ENCODE measurements at regions of chr1 and their contacts with region 1.

Region 1: DNA sequence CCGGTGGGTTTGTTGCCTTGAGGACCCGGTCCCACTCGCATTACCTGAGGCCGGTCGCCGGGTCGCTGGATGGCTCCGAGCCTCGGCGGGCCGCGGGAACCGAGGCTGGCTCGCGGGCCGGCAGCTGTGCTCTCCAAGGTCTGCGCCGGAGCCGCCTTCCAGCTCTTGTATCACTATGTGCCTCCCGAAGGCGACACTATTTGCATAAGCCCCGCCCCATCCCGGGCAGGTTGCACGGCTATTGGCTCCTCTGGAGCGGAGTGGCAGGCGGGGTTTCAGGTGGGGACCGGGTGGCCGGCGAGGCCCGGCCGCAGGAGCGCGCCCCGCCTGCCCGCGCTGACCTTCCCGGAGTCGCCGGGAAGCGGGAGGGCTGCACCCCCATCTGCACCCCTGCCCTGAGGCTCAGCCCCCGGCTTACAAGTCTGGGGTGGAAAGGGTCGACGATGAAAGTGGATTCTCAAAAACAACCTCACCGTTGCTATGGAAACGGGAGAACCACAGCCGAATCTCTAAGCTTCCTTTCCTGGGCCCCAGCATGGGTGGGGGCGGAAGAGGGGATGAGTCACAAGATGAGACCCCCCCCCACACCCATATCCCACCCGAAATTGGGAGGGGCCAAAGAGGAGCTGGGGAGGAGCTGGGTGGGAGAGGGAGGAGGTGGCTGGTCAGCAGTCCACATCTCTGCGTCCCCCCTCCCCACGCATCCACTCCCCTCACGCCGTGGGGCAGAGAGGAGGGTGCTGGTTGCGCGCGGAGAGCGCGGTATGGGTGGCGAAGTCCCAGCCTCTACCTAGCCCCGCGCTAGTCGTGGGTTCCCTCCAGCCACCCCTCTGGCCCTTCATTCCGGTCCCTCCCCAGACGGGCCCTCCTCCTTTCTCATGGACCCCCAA is at the start of gene HPCAL4:
- DNase-seq: peak; percentile 86 to 97
- H3K4me3 ChIP-seq: peak within 1 kb of the TSS; percentile 52
- H3K27ac ChIP-seq: no peak within 1 kb of the TSS
- H3K4me1 ChIP-seq: peaks cover 15% of the 10 kb centered on the region
- H3K27me3 ChIP-seq: peaks cover 7% of the 10 kb centered on the region; the same call in 1 of the 2 replicates
- CTCF ChIP-seq: no peak
- total RNA-seq, gene HPCAL4: 0.07 TPM in 1 of 2 replicates, not detected in the other

Region 2: GRCh38 chr1:39544327-39544726 is 147.2 kb before region 1 on chr1:
- CTCF ChIA-PET with region 1: interaction called, 24 read pairs
- POLR2A ChIA-PET with region 1: no interaction called
- intact Hi-C with region 1: no loop called
- DNase-seq: no peak
- H3K4me3 ChIP-seq: no peak overlapping the region
- H3K27ac ChIP-seq: no peak overlapping the region
- H3K4me1 ChIP-seq: no peaks in the 10 kb centered on the region
- H3K27me3 ChIP-seq: no peaks in the 10 kb centered on the region
- CTCF ChIP-seq: no peak

Region 3: DNA sequence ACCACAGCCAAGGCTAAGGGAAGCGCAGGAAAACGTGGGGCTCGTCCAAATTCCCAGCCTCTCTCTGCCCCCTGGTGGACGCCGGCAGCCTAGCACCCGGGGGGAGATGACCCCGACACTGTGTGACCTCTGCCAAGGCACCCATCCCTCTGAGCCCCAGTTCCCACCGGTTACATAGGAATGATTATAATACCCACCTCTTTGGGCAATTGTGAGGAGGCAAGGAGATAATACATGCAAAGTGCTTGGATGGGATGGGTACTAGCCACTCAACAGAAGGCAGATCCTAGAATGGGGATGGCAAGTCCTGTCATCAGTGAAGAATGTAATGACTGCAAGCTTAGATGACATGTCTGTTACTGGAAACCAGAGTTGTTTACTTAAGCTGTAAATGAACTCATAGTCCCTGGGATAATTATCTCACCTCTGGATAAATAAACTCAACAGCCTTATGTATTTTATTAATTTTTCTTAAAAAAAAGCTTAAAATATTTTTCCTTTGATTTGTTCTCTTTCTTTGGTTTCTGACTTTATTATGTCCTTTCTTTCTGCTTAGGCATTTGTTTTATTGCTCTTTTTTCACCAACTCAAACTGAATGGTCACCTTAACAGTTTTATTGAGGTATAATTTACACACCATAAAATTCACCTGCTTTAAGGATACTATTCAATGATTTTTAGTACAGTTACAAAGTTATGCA is 108.4 kb after region 1 on chr1:
- CTCF ChIA-PET with region 1: interaction called, 13 read pairs
- POLR2A ChIA-PET with region 1: no interaction called
- intact Hi-C with region 1: no loop called
- DNase-seq: peak; percentile 82 to 91
- H3K4me3 ChIP-seq: no peak overlapping the region
- H3K27ac ChIP-seq: no peak overlapping the region
- H3K4me1 ChIP-seq: peaks cover 13% of the 10 kb centered on the region
- H3K27me3 ChIP-seq: no peaks in the 10 kb centered on the region
- CTCF ChIP-seq: peak; percentile 96

Region 4: DNA sequence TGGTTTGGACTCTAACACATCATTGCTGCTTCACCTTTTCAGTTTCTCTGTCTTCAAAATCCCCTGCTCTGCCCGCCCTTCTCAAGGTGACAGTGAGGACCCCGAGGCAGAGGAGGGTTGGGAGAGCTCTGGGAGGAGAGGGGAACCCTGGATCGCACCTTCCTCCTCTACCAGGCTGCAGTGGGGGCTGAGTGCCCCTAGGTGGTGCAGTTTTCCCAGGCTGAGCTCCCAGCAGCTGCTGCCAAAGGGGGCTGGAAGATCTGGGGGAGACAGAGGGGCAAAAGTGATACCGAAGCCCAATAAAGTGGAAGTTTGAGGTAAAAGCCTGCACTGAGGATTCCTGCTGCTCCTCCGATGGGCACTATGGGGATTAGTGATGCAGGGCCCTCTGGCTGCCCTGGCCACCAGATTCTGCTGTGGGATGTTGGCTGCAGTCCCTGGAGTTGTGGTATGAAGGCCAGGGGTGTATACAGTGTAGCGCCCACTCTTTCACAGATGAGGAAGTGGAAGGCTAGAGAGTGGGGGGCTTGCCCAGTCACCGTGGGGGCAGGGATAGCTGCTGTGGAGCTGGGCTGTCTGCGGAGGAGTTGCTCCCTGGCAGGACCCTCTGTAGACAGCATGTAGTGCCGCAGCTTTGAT is 1591.3 kb after region 1 on chr1:
- CTCF ChIA-PET with region 1: no interaction called
- POLR2A ChIA-PET with region 1: no interaction called
- intact Hi-C with region 1: no loop called
- DNase-seq: peak in 1 of 2 experiments; percentile 54
- H3K4me3 ChIP-seq: no peak overlapping the region
- H3K27ac ChIP-seq: no peak overlapping the region
- H3K4me1 ChIP-seq: no peaks in the 10 kb centered on the region; the same call in 1 of the 2 replicates
- H3K27me3 ChIP-seq: peaks cover 6% of the 10 kb centered on the region; the same call in 1 of the 2 replicates
- CTCF ChIP-seq: peak; percentile 87